ENCODE measurements at regions of chr3 and their contacts with region 1.

Region 1: GRCh38 chr3:156509189-156510174 is 45.4 kb downstream of the SSR3 start:
- DNase-seq: peak in 7 of 9 donors; percentile 30 to 71 (median 62)
- ATAC-seq: peak; percentile 82
- H3K4me3 ChIP-seq: no peak overlapping the region
- H3K4me3 Mint-ChIP-seq: no peak overlapping the region
- H3K27ac ChIP-seq: no peak overlapping the region
- H3K27ac Mint-ChIP-seq: no peak overlapping the region
- H3K4me1 ChIP-seq: no peaks in the 10 kb centered on the region
- H3K4me1 Mint-ChIP-seq: peaks cover 0 to 21% (median 9%) of the 10 kb centered on the region in 7 donors
- H3K27me3 ChIP-seq: no peaks in the 10 kb centered on the region
- H3K27me3 Mint-ChIP-seq: peaks cover 0 to 40% (median 17%) of the 10 kb centered on the region in 5 donors

Region 2: GRCh38 chr3:156341831-156342416 is 167.6 kb before region 1 on chr3:
- CTCF ChIA-PET with region 1: no interaction called
- POLR2A ChIA-PET with region 1: no interaction called
- intact Hi-C with region 1: loop called (anchors 5 to 10 kb)
- DNase-seq: no peak
- ATAC-seq: no peak
- H3K4me3 ChIP-seq: no peak overlapping the region
- H3K4me3 Mint-ChIP-seq: no peak overlapping the region
- H3K27ac ChIP-seq: no peak overlapping the region
- H3K27ac Mint-ChIP-seq: no peak overlapping the region
- H3K4me1 ChIP-seq: no peaks in the 10 kb centered on the region
- H3K4me1 Mint-ChIP-seq: peaks cover 0 to 3% (median 0%) of the 10 kb centered on the region in 7 donors
- H3K27me3 ChIP-seq: no peaks in the 10 kb centered on the region
- H3K27me3 Mint-ChIP-seq: peaks cover 0 to 26% (median 25%) of the 10 kb centered on the region in 5 donors

Region 3: GRCh38 chr3:156474560-156475389 is 34.7 kb before region 1 on chr3:
- CTCF ChIA-PET with region 1: interaction called, 16 read pairs
- POLR2A ChIA-PET with region 1: interaction called, 3 read pairs
- intact Hi-C with region 1: loop called (anchors 1 kb)
- DNase-seq: peak in 2 of 9 donors; percentile 3 to 12
- ATAC-seq: no peak
- H3K4me3 ChIP-seq: no peak overlapping the region
- H3K4me3 Mint-ChIP-seq: peak overlapping the region in 3 of 10 donors; percentile 5 to 33 (median 21)
- H3K27ac ChIP-seq: no peak overlapping the region
- H3K27ac Mint-ChIP-seq: peak overlapping the region in 2 of 9 donors; percentile 5 to 22
- H3K4me1 ChIP-seq: no peaks in the 10 kb centered on the region
- H3K4me1 Mint-ChIP-seq: peaks cover 0 to 5% (median 0%) of the 10 kb centered on the region in 7 donors
- H3K27me3 ChIP-seq: no peaks in the 10 kb centered on the region
- H3K27me3 Mint-ChIP-seq: peaks cover 0 to 71% (median 9%) of the 10 kb centered on the region in 5 donors

Region 4: DNA sequence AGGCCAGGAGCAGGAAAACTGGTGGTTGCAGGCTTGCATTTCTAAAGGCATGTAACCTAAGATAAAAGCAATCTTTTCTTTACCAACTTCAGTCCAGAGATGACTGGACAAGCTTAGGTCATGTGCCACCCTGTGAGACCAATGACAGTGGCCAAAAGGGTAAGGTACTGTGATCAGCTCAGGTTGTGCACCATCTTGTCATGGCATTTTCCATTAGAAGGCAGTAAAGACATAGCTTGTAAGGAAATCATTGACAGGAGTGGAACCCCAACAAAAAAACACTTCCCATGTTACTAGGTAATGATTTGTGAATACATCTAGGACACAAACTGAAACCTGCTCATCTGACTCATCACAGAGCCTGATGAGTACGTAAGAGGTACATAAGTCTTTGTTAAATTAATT is 10.3 kb after region 1 on chr3:
- CTCF ChIA-PET with region 1: interaction called, 10 read pairs
- POLR2A ChIA-PET with region 1: interaction called, 3 read pairs
- intact Hi-C with region 1: no loop called
- DNase-seq: no peak
- ATAC-seq: no peak
- H3K4me3 ChIP-seq: no peak overlapping the region
- H3K4me3 Mint-ChIP-seq: no peak overlapping the region
- H3K27ac ChIP-seq: no peak overlapping the region
- H3K27ac Mint-ChIP-seq: no peak overlapping the region
- H3K4me1 ChIP-seq: peaks cover 2 to 6% of the 10 kb centered on the region in 2 donors
- H3K4me1 Mint-ChIP-seq: peaks cover 6 to 26% (median 9%) of the 10 kb centered on the region in 7 donors
- H3K27me3 ChIP-seq: no peaks in the 10 kb centered on the region
- H3K27me3 Mint-ChIP-seq: peaks cover 13 to 84% (median 33%) of the 10 kb centered on the region in 5 donors

Region 5: DNA sequence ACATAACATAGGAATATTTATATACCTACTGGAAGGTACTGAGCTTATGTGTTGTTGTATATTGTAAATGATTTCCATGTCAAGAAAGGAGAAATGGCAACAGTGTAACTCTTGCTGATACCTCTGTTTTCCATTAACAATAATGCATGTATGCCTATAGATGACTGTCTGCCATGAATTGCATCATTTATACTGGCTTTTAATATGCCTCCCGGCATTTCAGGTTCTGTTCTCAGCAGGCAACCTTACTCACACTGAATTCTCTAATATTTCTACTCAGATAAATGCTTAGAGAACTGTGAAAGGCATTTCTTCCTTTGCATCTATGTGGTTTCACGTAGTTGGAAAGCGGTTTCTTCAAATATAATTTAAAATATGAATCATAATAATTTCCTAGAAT is 358.4 kb after region 1 on chr3:
- CTCF ChIA-PET with region 1: no interaction called
- POLR2A ChIA-PET with region 1: no interaction called
- intact Hi-C with region 1: no loop called
- DNase-seq: no peak
- ATAC-seq: no peak
- H3K4me3 ChIP-seq: no peak overlapping the region
- H3K4me3 Mint-ChIP-seq: no peak overlapping the region
- H3K27ac ChIP-seq: no peak overlapping the region
- H3K27ac Mint-ChIP-seq: no peak overlapping the region
- H3K4me1 ChIP-seq: no peaks in the 10 kb centered on the region
- H3K4me1 Mint-ChIP-seq: no peaks in the 10 kb centered on the region
- H3K27me3 ChIP-seq: no peaks in the 10 kb centered on the region
- H3K27me3 Mint-ChIP-seq: peaks cover 0 to 16% (median 3%) of the 10 kb centered on the region in 5 donors

Region 6: DNA sequence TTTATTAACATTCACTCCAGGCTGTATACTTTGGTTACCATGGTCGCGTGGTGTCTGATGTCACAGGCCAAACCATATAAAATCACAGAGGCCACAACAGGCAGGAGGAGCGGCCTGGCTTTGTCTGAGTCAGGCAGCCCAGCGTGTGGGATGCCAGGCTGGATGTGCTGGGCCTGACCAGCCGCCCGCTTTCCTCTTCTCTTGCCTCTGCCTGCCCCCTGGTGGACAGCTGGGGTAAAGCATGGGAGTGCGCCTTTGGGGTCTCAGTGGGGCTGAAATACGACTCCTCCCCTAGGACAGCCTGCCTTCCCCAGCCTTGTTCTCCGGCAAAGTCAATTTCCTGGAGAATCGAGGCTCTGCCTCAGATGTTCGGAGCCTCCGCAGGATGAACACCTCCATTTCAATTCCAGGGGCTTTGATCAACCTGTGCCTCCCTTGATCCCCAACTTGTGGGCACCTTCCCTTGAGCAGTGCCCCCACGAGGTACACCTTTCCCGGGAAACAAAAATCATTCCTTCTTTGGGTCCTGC is 572.3 kb after region 1 on chr3:
- CTCF ChIA-PET with region 1: interaction called, 3 read pairs
- POLR2A ChIA-PET with region 1: no interaction called
- intact Hi-C with region 1: loop called in 1 of 2 experiments (anchors 1 kb)
- DNase-seq: peak; percentile 60 to 86 (median 70)
- ATAC-seq: peak; percentile 96
- H3K4me3 ChIP-seq: no peak overlapping the region
- H3K4me3 Mint-ChIP-seq: no peak overlapping the region
- H3K27ac ChIP-seq: no peak overlapping the region
- H3K27ac Mint-ChIP-seq: peak overlapping the region in 8 of 9 donors; percentile 9 to 79 (median 56)
- H3K4me1 ChIP-seq: peaks cover 0 to 12% of the 10 kb centered on the region in 2 donors
- H3K4me1 Mint-ChIP-seq: peaks cover 0 to 54% (median 6%) of the 10 kb centered on the region in 7 donors
- H3K27me3 ChIP-seq: no peaks in the 10 kb centered on the region
- H3K27me3 Mint-ChIP-seq: no peaks in the 10 kb centered on the region

Measured in naive thymus-derived CD4-positive, alpha-beta T cell (primary cell).